ENCODE measurements at regions of chr17 and their contacts with region 1.

Region 1: GRCh38 chr17:49707608-49708514 is at the start of gene SLC35B1:
- DNase-seq: peak; percentile 100
- ATAC-seq: peak; percentile 97
- H3K4me3 Mint-ChIP-seq: peak within 1 kb of the TSS; percentile 93
- H3K27ac Mint-ChIP-seq: peak within 1 kb of the TSS; percentile 97
- H3K4me1 Mint-ChIP-seq: peaks cover 39% of the 10 kb centered on the region
- H3K27me3 Mint-ChIP-seq: no peaks in the 10 kb centered on the region
- total RNA-seq, gene SLC35B1: 43.9 to 59.4 TPM

Region 2: GRCh38 chr17:49361902-49362722 is 345.7 kb before region 1 on chr17 and contains the start of gene ZNF652:
- CTCF ChIA-PET with region 1: no interaction called
- POLR2A ChIA-PET with region 1: no interaction called
- intact Hi-C with region 1: loop called in 1 of 2 experiments (anchors 1 kb)
- DNase-seq: peak; percentile 93
- ATAC-seq: peak; percentile 57
- H3K4me3 Mint-ChIP-seq: peak within 1 kb of the TSS; percentile 92
- H3K27ac Mint-ChIP-seq: peak within 1 kb of the TSS; percentile 92
- H3K4me1 Mint-ChIP-seq: peaks cover 50% of the 10 kb centered on the region
- H3K27me3 Mint-ChIP-seq: peaks cover 1% of the 10 kb centered on the region
- total RNA-seq, gene ZNF652: 5.2 to 7.0 TPM

Region 3: GRCh38 chr17:49545806-49546545 is 161.9 kb before region 1 on chr17:
- CTCF ChIA-PET with region 1: no interaction called
- POLR2A ChIA-PET with region 1: no interaction called
- intact Hi-C with region 1: no loop called
- DNase-seq: no peak
- ATAC-seq: no peak
- H3K4me3 Mint-ChIP-seq: no peak overlapping the region
- H3K27ac Mint-ChIP-seq: no peak overlapping the region
- H3K4me1 Mint-ChIP-seq: no peaks in the 10 kb centered on the region
- H3K27me3 Mint-ChIP-seq: peaks cover 7% of the 10 kb centered on the region

Region 4: DNA sequence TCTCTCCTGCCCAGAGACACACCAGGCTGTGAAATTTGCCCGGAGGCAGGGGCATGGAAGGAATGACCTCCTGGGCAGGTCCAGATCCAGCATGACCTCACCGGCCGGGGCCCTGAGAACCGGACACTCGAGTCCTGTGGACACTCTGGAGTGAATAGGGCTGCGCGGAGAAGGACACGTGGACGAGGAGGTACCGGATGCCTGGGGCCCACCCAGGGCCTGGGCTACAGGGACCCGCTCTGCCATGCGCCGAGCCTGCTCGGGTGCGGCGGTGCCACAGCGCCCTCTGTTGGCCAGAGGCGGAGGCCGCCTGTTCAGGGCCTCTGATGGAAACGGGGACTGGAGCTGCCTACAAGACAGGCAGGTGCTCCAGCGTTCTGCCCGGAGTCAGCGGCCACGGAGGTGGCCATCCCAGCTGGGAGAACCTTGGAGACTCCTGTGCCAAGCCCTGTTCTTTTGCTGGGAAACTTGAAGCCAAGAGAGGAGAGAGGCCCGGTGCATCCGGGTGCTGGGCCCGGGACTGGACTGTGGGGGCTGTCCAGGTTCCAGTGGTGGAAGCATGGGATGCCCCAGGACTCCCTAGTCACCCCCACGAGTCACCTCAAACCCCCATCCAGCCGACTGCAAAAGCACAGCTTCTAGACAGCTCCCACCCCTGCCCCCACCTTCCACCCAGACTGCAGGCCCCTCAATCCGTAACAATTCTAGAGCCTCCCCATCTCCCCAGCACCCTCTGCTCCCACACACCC is 151.5 kb before region 1 on chr17:
- CTCF ChIA-PET with region 1: interaction called, 13 read pairs
- POLR2A ChIA-PET with region 1: no interaction called
- intact Hi-C with region 1: no loop called
- DNase-seq: peak; percentile 92
- ATAC-seq: peak; percentile 96
- H3K4me3 Mint-ChIP-seq: no peak overlapping the region
- H3K27ac Mint-ChIP-seq: no peak overlapping the region
- H3K4me1 Mint-ChIP-seq: peaks cover 8% of the 10 kb centered on the region
- H3K27me3 Mint-ChIP-seq: peaks cover 3% of the 10 kb centered on the region

Region 5: DNA sequence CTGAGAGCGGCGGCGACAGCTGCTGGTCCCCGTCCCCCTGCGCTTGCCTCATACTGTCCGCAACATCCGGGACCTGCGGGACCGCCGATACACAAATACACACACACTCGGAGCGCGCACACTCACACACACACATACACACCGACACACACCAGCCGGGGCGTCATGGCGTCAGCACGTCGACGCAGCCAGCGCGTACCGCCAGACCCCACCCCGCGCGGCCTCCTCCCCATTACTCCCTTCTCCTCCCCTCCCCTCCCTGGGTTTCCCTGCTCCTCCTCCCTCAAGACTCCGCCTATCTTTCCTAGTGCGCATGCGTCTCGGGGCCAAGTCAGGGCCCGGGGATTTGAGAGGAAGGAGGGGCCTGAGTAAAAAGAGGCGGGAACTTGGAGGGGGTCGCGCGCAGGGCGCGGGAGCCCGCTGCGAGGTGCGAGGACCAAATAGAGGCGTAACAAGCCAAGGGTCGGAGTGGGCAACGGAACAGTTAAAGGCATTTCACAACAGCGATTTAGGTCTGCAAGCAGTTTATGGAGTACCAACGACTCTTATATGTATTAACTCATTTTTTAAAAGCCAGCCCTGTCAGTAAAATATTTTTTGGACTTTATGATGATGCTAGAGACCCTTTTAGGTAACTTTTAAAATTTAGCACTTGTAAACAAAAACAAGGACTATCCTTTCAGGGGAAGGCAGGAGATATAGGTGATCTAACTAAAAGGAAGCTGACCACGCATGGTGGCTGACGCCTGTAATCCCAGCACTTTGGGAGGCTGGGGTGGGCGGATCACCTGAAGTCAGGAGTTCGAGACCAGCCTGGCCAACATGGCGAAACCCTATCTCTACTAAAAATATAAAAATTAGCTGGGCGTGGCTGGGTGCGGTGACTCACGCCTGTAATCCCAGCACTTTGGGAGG is 29.7 kb before region 1 on chr17 and contains the start of gene SPOP:
- CTCF ChIA-PET with region 1: interaction called, 3 read pairs
- POLR2A ChIA-PET with region 1: no interaction called
- intact Hi-C with region 1: loop called (anchors 1 to 2 kb)
- DNase-seq: peak; percentile 100
- ATAC-seq: peak; percentile 96
- H3K4me3 Mint-ChIP-seq: peak within 1 kb of the TSS; percentile 95
- H3K27ac Mint-ChIP-seq: peak within 1 kb of the TSS; percentile 96
- H3K4me1 Mint-ChIP-seq: peaks cover 39% of the 10 kb centered on the region
- H3K27me3 Mint-ChIP-seq: no peaks in the 10 kb centered on the region
- total RNA-seq, gene SPOP: 57.0 to 64.6 TPM

Region 6: GRCh38 chr17:49739641-49740271 is 31.9 kb after region 1 on chr17:
- CTCF ChIA-PET with region 1: interaction called, 16 read pairs
- POLR2A ChIA-PET with region 1: interaction called, 3 read pairs
- intact Hi-C with region 1: loop called in 1 of 2 experiments (anchors 1 kb)
- DNase-seq: peak; percentile 90
- ATAC-seq: peak; percentile 88
- H3K4me3 Mint-ChIP-seq: peak overlapping the region; percentile 74
- H3K27ac Mint-ChIP-seq: peak overlapping the region; percentile 99
- H3K4me1 Mint-ChIP-seq: peaks cover 75% of the 10 kb centered on the region
- H3K27me3 Mint-ChIP-seq: no peaks in the 10 kb centered on the region

Region 7: DNA sequence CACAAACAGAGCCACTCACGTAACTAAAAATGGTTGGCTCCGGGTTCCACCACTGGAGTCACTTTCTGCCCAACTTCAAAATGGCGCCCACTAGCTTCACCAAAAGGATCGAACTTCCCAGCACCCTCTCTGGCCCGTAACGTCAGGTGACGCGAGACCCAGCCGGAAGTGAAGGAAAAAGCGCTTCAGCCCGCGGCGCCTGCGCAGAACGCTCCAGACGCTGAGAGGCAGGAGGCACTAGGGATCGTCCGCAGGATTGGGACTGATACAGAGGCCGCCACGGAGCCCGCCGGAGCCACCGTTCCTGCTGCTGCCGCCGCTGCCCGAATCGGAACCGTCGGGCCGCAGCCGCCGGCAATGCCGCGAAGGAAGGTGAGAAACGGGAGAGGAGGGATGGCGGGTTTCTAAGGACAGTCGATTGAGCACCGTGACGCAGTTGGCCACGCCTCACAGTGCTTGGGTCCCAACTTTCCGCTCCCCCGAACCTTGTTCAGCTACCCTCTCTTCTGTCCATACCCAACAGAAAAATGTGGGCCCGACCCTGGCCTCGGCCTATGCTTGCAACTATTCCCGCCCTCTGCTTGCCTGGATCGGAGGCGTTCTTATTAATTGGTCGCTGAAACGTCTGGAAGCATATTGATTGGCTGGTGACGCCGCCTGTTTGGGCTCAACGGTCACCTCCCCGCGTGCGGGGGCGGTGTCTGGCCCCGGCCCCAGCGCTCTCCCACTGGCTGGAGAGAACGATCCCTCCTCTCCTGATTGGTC is 80.8 kb after region 1 on chr17 and contains the start of gene KAT7:
- CTCF ChIA-PET with region 1: interaction called, 29 read pairs
- POLR2A ChIA-PET with region 1: interaction called, 7 read pairs
- intact Hi-C with region 1: loop called (anchors 1 kb)
- DNase-seq: peak; percentile 99
- ATAC-seq: peak; percentile 91
- H3K4me3 Mint-ChIP-seq: peak within 1 kb of the TSS; percentile 89
- H3K27ac Mint-ChIP-seq: peak within 1 kb of the TSS; percentile 98
- H3K4me1 Mint-ChIP-seq: peaks cover 53% of the 10 kb centered on the region
- H3K27me3 Mint-ChIP-seq: no peaks in the 10 kb centered on the region
- total RNA-seq, gene KAT7: 63.5 to 93.0 TPM

Region 8: DNA sequence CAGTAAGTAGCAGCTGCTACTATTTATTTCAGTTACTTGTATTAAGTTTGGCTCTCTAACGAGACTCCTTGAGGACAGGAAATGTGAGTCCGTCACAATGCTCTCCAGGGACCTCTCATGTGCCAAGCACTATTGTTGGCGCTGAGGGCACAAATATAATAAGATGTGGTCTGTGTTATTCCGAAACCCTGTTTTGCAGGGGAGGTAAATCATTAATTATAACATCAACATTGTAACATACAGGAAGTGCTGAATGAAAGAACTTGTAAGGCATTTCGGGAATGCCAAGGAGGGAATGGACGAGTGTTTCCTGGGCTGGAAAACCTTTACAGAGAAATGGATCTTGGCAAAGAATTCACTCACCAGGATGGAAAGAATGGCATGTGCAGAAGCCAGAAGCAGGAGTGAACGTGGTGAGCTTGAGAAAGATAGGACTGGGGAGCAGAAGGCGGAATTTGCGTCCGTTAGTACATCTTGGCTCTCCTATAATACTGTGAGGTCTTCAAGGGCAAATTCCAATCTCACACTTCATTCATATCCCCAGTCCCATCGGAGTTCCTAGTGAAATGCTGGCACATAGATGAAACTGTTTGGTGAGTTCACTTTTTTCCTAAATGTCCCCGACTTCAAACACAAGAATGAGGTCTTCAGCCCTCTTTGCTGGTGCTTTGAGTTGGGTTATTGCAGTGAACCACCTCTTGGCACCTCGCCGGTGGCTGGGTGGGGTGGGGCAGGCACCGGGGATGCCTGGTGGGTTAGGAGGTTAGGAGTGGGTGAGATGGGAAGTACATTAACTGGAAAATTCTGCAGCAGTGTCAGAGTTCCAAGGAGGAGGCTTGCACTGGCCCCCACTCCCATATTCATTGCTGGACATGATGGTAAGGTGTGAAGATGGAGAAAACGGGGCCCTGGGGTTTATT is 128.5 kb after region 1 on chr17:
- CTCF ChIA-PET with region 1: no interaction called
- POLR2A ChIA-PET with region 1: no interaction called
- intact Hi-C with region 1: no loop called
- DNase-seq: no peak
- ATAC-seq: no peak
- H3K4me3 Mint-ChIP-seq: no peak overlapping the region
- H3K27ac Mint-ChIP-seq: no peak overlapping the region
- H3K4me1 Mint-ChIP-seq: no peaks in the 10 kb centered on the region
- H3K27me3 Mint-ChIP-seq: no peaks in the 10 kb centered on the region

Region 9: DNA sequence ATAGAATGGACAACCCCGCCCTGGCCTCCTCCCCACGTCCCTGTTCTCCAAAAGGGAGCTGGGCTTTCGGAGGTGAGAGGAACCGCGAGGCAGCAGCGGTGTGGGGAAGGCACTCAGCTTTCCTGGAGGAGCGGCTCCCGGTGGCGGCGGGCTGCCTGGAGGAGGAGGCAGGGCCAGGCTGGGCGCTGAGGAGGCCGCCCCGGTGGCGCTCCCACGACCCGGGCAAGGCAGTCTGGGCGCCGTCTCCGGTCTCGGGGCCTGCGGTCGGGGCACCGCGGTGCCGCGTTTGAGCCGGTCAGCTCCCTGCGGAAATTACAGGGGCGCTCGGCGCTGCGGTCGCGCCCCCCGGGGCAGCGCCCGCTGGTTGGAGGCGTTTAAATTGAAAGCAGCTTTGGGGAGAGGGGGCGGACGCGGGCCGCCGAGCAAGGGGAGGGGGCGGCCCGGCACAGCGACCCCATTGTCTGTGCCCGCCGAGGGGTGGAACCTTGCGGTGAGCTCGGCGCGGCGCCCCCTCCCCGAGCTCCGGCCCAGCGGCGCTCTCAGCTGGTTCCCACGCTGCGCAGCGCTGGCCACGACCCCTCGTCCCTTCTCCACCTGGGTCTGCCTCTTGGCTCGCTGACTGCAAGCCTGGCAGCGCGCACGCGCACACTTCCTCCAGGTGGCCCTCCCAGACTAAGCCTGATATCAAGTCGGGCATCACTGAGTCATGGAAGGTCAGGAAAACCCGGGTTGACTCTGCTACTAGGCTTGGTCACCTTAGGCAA is 202.4 kb after region 1 on chr17:
- CTCF ChIA-PET with region 1: no interaction called
- POLR2A ChIA-PET with region 1: no interaction called
- intact Hi-C with region 1: no loop called
- DNase-seq: peak; percentile 59
- ATAC-seq: peak; percentile 79
- H3K4me3 Mint-ChIP-seq: peak overlapping the region; percentile 30
- H3K27ac Mint-ChIP-seq: no peak overlapping the region
- H3K4me1 Mint-ChIP-seq: peaks cover 6% of the 10 kb centered on the region
- H3K27me3 Mint-ChIP-seq: peaks cover 66% of the 10 kb centered on the region

Region 10: GRCh38 chr17:50547035-50547735 is 839.3 kb after region 1 on chr17 and contains the start of gene SPATA20:
- CTCF ChIA-PET with region 1: no interaction called
- POLR2A ChIA-PET with region 1: no interaction called
- intact Hi-C with region 1: no loop called
- DNase-seq: peak; percentile 93
- ATAC-seq: peak; percentile 88
- H3K4me3 Mint-ChIP-seq: peak within 1 kb of the TSS; percentile 63
- H3K27ac Mint-ChIP-seq: no peak within 1 kb of the TSS
- H3K4me1 Mint-ChIP-seq: peaks cover 8% of the 10 kb centered on the region
- H3K27me3 Mint-ChIP-seq: peaks cover 7% of the 10 kb centered on the region
- total RNA-seq, gene SPATA20: 9.0 to 10.7 TPM